ENCODE measurements at regions of chr17 and their contacts with region 1.

Region 1: GRCh38 chr17:50397111-50397918 is at the start of gene LRRC59:
- DNase-seq: peak; percentile 71
- H3K4me3 ChIP-seq: peak within 1 kb of the TSS; percentile 59 to 86 (median 61)
- H3K27ac ChIP-seq: peak within 1 kb of the TSS; percentile 78
- H3K4me1 ChIP-seq: peaks cover 19% of the 10 kb centered on the region
- H3K27me3 ChIP-seq: no peaks in the 10 kb centered on the region
- CTCF ChIP-seq: peak; percentile 93 to 95
- total RNA-seq, gene LRRC59: 118 to 190 TPM

Region 2: GRCh38 chr17:50372758-50373556 is 24.4 kb before region 1 on chr17 and contains the starts of genes EME1 and MRPL27:
- CTCF ChIA-PET with region 1: no interaction called
- dilution Hi-C with region 1: no loop called
- in situ Hi-C with region 1: no loop called
- intact Hi-C with region 1: loop called (anchors 2 kb)
- DNase-seq: peak; percentile 89
- H3K4me3 ChIP-seq: peak within 1 kb of the TSS; percentile 88 to 98 (median 92)
- H3K27ac ChIP-seq: peak within 1 kb of the TSS; percentile 84
- H3K4me1 ChIP-seq: peaks cover 13% of the 10 kb centered on the region
- H3K27me3 ChIP-seq: no peaks in the 10 kb centered on the region
- CTCF ChIP-seq: no peak
- total RNA-seq, gene EME1: 0.17 to 8.0 TPM
- total RNA-seq, gene MRPL27: 43.5 to 73.5 TPM

Region 3: GRCh38 chr17:50425682-50426471 is 28.6 kb after region 1 on chr17 and contains the start of gene ACSF2:
- CTCF ChIA-PET with region 1: interaction called, 3 read pairs
- dilution Hi-C with region 1: no loop called
- in situ Hi-C with region 1: no loop called
- intact Hi-C with region 1: loop called (anchors 1 kb)
- DNase-seq: peak; percentile 57
- H3K4me3 ChIP-seq: peak within 1 kb of the TSS; percentile 58 to 79 (median 61)
- H3K27ac ChIP-seq: peak within 1 kb of the TSS; percentile 56
- H3K4me1 ChIP-seq: peaks cover 61% of the 10 kb centered on the region
- H3K27me3 ChIP-seq: no peaks in the 10 kb centered on the region
- CTCF ChIP-seq: no peak
- total RNA-seq, gene ACSF2: 28.1 to 37.2 TPM

Region 4: GRCh38 chr17:50452610-50453300 is 55.4 kb after region 1 on chr17:
- CTCF ChIA-PET with region 1: no interaction called
- dilution Hi-C with region 1: loop called (anchors 10 kb)
- in situ Hi-C with region 1: no loop called
- intact Hi-C with region 1: no loop called
- DNase-seq: peak; percentile 59
- H3K4me3 ChIP-seq: no peak overlapping the region
- H3K27ac ChIP-seq: no peak overlapping the region
- H3K4me1 ChIP-seq: peaks cover 6% of the 10 kb centered on the region
- H3K27me3 ChIP-seq: no peaks in the 10 kb centered on the region
- CTCF ChIP-seq: no peak

Region 5: DNA sequence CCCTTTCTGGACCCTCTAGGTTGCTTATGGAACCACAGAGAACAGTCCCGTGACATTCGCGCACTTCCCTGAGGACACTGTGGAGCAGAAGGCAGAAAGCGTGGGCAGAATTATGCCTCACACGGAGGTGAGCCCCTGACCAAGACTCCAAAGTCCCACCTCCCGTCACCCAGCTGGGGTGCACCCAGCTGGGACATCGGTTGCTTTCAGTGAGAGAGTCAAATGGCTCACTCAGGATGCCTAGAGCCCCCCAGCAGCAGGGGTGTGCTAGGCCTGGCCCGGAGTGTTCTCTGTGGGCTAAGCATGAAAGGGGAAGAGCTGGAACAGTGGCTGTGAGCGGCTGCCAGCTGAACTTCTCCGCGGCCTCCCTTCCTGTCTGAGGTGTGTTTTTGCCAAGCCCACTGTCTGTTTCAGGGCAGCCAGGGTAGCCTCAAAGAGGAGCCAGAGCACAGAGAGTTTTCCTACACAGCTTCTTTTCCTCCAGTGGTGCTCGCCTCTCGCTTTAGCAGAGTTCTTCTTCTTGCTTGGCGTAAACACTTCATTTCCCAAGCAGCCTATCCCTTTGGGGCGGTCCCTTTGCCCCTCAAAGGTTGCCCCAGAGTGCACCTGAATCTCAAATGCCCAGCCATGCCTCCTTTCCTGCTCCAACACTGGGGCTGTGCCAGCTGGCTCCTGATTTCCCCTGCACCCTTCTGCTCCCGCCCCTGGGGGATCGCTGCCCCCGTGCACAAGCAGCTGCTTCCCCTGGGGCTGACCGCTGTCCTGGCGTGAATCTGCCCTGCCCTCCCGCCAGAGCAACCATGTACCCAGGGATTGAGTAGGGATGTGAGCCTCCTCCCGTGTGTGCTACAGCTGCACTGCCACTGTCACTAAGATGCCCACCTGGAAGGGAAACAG is 73.9 kb after region 1 on chr17:
- CTCF ChIA-PET with region 1: no interaction called
- dilution Hi-C with region 1: loop called (anchors 5 kb)
- in situ Hi-C with region 1: no loop called
- intact Hi-C with region 1: no loop called
- DNase-seq: no peak
- H3K4me3 ChIP-seq: no peak overlapping the region
- H3K27ac ChIP-seq: no peak overlapping the region
- H3K4me1 ChIP-seq: peaks cover 21% of the 10 kb centered on the region
- H3K27me3 ChIP-seq: peaks cover 4% of the 10 kb centered on the region
- CTCF ChIP-seq: no peak

Measured in mammary epithelial cell (primary cell).